ENCODE measurements at regions of chr10 and their contacts with region 1.

Region 1: GRCh38 chr10:80509403-80510161 is 28.1 kb upstream of the SH2D4B start:
- DNase-seq: peak; percentile 98
- H3K4me3 ChIP-seq: no peak overlapping the region
- H3K27ac ChIP-seq: peak overlapping the region; percentile 90
- H3K4me1 ChIP-seq: peaks cover 65% of the 10 kb centered on the region
- H3K27me3 ChIP-seq: no peaks in the 10 kb centered on the region
- CTCF ChIP-seq: no peak
- POLR2A ChIP-seq: peak; percentile 49

Region 2: GRCh38 chr10:80408242-80409101 is 101.1 kb before region 1 on chr10 and contains the start of gene PRXL2A:
- CTCF ChIA-PET with region 1: interaction called, 11 read pairs
- POLR2A ChIA-PET with region 1: interaction called, 6 read pairs
- dilution Hi-C with region 1: no loop called
- intact Hi-C with region 1: loop called (anchors 1 kb)
- DNase-seq: peak; percentile 90
- H3K4me3 ChIP-seq: peak within 1 kb of the TSS; percentile 81 to 89 (median 87)
- H3K27ac ChIP-seq: peak within 1 kb of the TSS; percentile 93
- H3K4me1 ChIP-seq: peaks cover 42% of the 10 kb centered on the region
- H3K27me3 ChIP-seq: no peaks in the 10 kb centered on the region
- CTCF ChIP-seq: peak in 1 of 2 donors; percentile 4
- POLR2A ChIP-seq: peak; percentile 90
- total RNA-seq, gene PRXL2A: 290 and 321 TPM in 2 replicates

Region 3: GRCh38 chr10:80453701-80454513 is 55.7 kb before region 1 on chr10 and contains the start of gene TSPAN14:
- CTCF ChIA-PET with region 1: interaction called, 1,118 read pairs
- POLR2A ChIA-PET with region 1: interaction called, 5 read pairs
- dilution Hi-C with region 1: no loop called
- intact Hi-C with region 1: loop called (anchors 1 kb)
- DNase-seq: peak; percentile 83
- H3K4me3 ChIP-seq: peak within 1 kb of the TSS; percentile 80 to 87 (median 83)
- H3K27ac ChIP-seq: peak within 1 kb of the TSS; percentile 86
- H3K4me1 ChIP-seq: peaks cover 40% of the 10 kb centered on the region
- H3K27me3 ChIP-seq: no peaks in the 10 kb centered on the region
- CTCF ChIP-seq: peak in 1 of 2 donors; percentile 3
- POLR2A ChIP-seq: peak; percentile 76
- total RNA-seq, gene TSPAN14: 237 and 242 TPM in 2 replicates

Region 4: GRCh38 chr10:80464557-80465450 is 44.8 kb before region 1 on chr10:
- CTCF ChIA-PET with region 1: interaction called, 1,118 read pairs
- POLR2A ChIA-PET with region 1: interaction called, 9 read pairs
- dilution Hi-C with region 1: no loop called
- intact Hi-C with region 1: loop called (anchors 1 kb)
- DNase-seq: peak; percentile 78
- H3K4me3 ChIP-seq: peak overlapping the region in 2 of 3 experiments; percentile 13 to 23
- H3K27ac ChIP-seq: peak overlapping the region; percentile 79
- H3K4me1 ChIP-seq: peaks cover 97% of the 10 kb centered on the region
- H3K27me3 ChIP-seq: no peaks in the 10 kb centered on the region
- CTCF ChIP-seq: no peak
- POLR2A ChIP-seq: peak; percentile 37

Region 5: DNA sequence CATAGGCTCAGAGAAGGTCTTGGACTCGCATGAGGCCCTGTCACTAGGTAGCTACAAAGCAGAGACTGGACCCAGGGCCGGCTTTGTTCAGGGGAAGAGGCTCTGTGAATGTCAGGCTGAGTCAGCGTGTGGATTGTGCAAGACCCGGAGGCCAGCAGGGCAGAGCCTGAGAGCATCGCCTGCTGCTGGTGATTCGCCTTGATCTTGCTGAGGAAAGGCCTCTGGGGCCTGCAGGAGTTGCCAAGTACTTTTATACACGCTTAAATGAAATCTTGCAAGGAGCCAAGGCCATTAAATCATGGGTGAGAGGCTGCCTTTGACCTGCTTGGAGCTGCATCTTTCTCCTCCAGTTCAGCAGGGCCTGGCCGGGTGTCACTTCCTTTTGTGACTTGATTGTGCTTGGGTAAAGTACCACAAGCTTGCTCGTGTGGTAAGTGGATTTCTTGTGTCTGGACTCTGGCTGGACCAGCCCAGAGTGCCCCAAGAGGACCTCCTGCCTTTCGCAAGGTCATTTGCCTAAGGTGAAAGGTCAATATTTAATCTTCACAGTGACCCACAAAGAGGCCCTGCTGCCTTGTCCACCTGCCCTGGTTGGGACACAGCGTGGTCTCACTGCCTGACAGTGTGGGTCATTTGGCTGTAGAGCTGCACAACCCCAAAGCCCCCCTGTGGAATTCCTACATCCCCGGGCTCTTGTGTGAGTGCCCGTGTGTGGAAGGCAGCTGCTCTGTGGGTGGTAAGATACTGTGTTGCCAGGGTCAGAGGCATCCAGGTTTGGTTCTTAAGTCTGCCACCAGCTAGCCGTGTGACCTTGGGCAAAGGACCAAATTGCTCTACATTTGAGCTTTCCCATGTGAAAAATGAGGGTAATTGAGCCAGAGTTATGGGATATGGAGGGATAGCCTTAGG is 10.5 kb before region 1 on chr10:
- CTCF ChIA-PET with region 1: interaction called, 36 read pairs
- POLR2A ChIA-PET with region 1: interaction called, 8 read pairs
- dilution Hi-C with region 1: no loop called
- intact Hi-C with region 1: loop called (anchors 1 kb)
- DNase-seq: peak; percentile 78
- H3K4me3 ChIP-seq: no peak overlapping the region
- H3K27ac ChIP-seq: peak overlapping the region; percentile 76
- H3K4me1 ChIP-seq: peaks cover 96% of the 10 kb centered on the region
- H3K27me3 ChIP-seq: no peaks in the 10 kb centered on the region
- CTCF ChIP-seq: no peak
- POLR2A ChIP-seq: peak; percentile 36

Region 6: DNA sequence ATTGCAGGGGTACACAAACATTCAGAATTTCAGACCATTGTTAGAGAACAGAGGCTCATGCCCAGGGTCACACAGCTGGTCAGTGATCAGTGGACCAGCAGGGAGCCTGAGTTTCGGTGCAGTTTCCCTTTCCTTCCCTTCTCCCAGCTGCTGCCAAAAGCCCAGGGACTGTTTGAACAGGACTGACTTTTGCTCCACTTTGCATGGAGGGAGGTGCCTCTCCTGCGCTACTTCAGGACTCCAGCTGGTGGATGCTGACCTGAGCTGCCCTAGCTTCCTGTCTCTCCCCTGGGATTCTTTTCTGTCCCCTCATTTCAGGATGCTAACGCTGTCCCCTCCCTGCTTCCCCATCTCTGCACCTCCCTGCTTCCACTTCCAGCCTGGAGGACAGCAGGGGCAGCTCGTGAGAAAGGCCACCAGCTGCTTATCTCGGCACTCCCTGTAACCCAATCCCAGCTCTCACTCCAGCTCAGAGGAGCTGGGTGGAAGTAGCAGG is 42.6 kb after region 1 on chr10:
- CTCF ChIA-PET with region 1: no interaction called
- POLR2A ChIA-PET with region 1: no interaction called
- dilution Hi-C with region 1: no loop called
- intact Hi-C with region 1: no loop called
- DNase-seq: peak; percentile 26
- H3K4me3 ChIP-seq: no peak overlapping the region
- H3K27ac ChIP-seq: no peak overlapping the region
- H3K4me1 ChIP-seq: no peaks in the 10 kb centered on the region
- H3K27me3 ChIP-seq: peaks cover 7 to 8% of the 10 kb centered on the region in 2 experiments
- CTCF ChIP-seq: no peak
- POLR2A ChIP-seq: no peak

Measured in endothelial cell of umbilical vein (primary cell).